Activated naive CD4-positive, alpha-beta T cell treated with anti-CD3 and anti-CD28 coated beads for 36 hours (primary cell): ENCODE measurements at regions of chr11 and their contacts with region 1.

Region 1: GRCh38 chr11:18757811-18758210 is 31.8 kb upstream of the IGSF22 start:
- DNase-seq: no peak
- H3K4me3 Mint-ChIP-seq: no peak overlapping the region
- H3K27ac Mint-ChIP-seq: no peak overlapping the region
- H3K4me1 Mint-ChIP-seq: no peaks in the 10 kb centered on the region
- H3K27me3 Mint-ChIP-seq: no peaks in the 10 kb centered on the region

Region 2: GRCh38 chr11:18383388-18384156 is 374.2 kb before region 1 on chr11:
- CTCF ChIA-PET with region 1: no interaction called
- intact Hi-C with region 1: loop called (anchors 5 kb)
- DNase-seq: peak; percentile 92
- H3K4me3 Mint-ChIP-seq: peak overlapping the region; percentile 42
- H3K27ac Mint-ChIP-seq: peak overlapping the region; percentile 89
- H3K4me1 Mint-ChIP-seq: peaks cover 34% of the 10 kb centered on the region
- H3K27me3 Mint-ChIP-seq: no peaks in the 10 kb centered on the region

Region 3: GRCh38 chr11:18540207-18541009 is 217.4 kb before region 1 on chr11:
- CTCF ChIA-PET with region 1: no interaction called
- intact Hi-C with region 1: loop called (anchors 1 kb)
- DNase-seq: no peak
- H3K4me3 Mint-ChIP-seq: no peak overlapping the region
- H3K27ac Mint-ChIP-seq: no peak overlapping the region
- H3K4me1 Mint-ChIP-seq: peaks cover 6% of the 10 kb centered on the region
- H3K27me3 Mint-ChIP-seq: no peaks in the 10 kb centered on the region

Region 4: DNA sequence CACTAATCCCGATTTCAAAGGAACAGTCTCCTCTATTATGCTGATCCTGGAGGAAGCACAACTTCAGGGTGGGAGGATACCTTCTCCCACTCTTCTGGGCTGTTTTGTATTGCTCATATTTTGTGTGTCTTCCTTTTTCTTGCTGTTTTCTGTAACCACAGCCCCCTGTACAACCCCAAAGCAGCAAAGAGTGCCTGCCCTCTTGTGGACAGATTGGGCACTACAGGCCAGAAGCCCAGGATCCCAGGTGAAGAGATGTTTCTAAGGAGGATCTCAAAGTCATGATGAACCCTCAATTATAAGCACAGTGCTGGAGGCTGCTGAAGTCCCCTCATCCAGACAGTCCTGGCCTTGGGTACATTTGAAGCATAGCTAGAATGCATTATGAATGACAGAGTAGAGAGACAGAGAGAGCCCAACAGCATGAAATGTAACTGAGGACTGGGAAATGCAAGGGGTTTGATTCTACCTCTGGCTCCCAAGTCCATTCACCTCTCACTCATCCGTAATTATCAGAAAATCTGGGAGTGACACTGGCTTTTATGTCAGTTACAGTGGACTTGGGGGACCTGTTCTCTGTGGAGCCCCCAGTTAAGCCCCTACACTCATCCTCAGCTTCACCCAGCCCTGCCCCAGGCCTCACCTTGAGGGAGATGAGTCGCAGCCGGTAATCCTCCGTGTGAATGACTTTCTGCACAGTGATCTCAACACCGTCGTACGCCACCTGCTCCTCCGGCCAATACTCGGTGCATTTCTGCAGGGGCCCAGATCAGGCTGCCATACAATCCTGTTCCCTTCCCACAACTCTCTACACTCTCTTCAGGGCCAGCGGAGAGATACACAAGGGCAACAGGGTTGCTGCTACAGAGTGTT is 25.6 kb before region 1 on chr11:
- CTCF ChIA-PET with region 1: interaction called, 10 read pairs
- intact Hi-C with region 1: no loop called
- DNase-seq: peak; percentile 79
- H3K4me3 Mint-ChIP-seq: no peak overlapping the region
- H3K27ac Mint-ChIP-seq: no peak overlapping the region
- H3K4me1 Mint-ChIP-seq: peaks cover 3% of the 10 kb centered on the region
- H3K27me3 Mint-ChIP-seq: no peaks in the 10 kb centered on the region